ENCODE measurements at regions of chr10 and their contacts with region 1.

Region 1: DNA sequence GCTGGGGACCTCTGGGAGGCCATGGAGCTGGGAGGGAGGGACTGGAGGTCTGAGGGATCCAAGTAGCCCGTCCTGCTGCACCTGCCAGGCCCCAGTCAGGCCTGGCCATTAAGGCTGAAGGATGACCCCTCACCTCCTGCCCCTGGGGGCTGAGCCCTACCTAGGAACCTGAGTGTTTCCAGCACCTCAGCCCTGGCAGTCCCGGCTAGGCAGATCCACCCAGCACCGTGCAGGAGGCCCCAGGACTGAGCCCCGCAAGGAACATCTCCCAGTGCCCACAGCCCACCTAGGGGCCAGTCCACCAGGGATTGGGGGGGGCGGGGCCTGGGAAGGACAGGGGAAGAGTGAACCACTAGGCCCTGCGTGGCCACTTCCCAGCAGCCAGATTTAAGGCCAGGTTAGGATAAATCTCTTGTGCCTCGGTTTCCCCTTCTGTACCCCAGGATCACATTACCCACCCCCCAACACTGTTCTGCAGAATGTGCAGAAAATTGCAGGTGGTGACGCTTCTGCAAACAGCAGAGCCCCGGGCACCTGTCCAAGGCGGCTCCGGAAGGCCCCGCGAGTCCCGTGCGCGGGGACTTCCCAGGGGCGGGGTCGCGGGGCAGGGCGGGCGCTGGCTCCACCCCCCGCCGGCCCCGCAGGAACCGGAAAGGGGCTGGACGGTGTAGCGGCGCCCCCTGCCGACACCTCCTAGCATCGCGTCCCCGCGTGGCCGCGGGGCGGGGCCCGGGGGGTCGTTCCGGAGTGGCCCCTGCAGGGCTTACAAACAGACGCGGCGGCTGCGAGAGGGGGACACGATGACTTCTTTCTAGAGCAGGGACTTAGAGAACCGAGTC is 55.9 kb downstream of the PWWP2B start:
- DNase-seq: peak; percentile 88 to 91 (median 90)
- H3K4me3 ChIP-seq: peak overlapping the region in 1 of 4 donors; percentile 39
- H3K27ac ChIP-seq: peak overlapping the region in 2 of 5 donors; percentile 23 to 63
- H3K4me1 ChIP-seq: peaks cover 22% of the 10 kb centered on the region in 2 donors
- H3K27me3 ChIP-seq: no peaks in the 10 kb centered on the region
- CTCF ChIP-seq: peak; percentile 78 to 99 (median 97)
- POLR2A ChIP-seq: no peak

Region 2: DNA sequence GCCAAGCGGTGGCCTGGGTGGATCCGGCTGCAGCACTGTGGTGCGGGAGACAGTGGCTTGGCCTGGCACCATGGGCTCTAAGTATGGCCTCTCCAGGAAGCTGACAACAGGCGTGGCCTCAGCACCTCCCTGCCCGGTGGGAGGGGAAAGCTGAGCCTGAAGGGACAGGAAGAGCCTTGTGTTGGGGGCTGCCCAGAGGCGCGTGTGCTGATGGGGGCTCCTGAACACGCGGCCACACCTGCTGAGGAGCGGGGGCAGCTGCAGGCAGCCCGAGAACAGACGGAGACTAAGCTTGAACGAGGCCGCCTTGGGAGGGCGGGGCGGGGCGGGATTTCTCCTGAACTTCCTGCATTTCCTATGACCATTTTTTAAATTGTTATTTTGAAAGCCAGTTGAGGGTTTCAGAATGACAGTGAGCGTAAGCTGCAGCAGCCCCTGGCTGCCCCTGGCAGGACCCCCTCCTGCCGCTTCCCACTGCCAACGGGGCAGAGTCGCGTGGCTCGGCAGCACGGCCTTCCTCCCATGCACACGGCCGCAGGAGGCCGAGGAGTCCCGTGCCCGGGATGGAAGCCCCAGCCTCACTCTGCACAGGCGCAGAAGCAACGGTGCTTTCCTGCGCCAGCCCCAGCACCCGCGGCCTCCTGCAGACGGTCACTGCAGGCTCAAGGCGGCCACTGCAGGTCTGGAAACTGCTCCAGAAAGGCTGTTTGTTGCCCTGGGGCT is 222.9 kb before region 1 on chr10:
- intact Hi-C with region 1: loop called in 1 of 2 experiments (anchors 5 kb)
- DNase-seq: peak in 4 of 7 donors; percentile 30 to 62 (median 36)
- H3K4me3 ChIP-seq: peak overlapping the region in 1 of 4 donors; percentile 29
- H3K27ac ChIP-seq: peak overlapping the region in 2 of 5 donors; percentile 7 to 69
- H3K4me1 ChIP-seq: no peaks in the 10 kb centered on the region
- H3K27me3 ChIP-seq: no peaks in the 10 kb centered on the region
- CTCF ChIP-seq: no peak
- POLR2A ChIP-seq: peak in 1 of 2 donors; percentile 35